T-cell (primary cell): ENCODE measurements at regions of chr19 and their contacts with region 1.

Region 1: DNA sequence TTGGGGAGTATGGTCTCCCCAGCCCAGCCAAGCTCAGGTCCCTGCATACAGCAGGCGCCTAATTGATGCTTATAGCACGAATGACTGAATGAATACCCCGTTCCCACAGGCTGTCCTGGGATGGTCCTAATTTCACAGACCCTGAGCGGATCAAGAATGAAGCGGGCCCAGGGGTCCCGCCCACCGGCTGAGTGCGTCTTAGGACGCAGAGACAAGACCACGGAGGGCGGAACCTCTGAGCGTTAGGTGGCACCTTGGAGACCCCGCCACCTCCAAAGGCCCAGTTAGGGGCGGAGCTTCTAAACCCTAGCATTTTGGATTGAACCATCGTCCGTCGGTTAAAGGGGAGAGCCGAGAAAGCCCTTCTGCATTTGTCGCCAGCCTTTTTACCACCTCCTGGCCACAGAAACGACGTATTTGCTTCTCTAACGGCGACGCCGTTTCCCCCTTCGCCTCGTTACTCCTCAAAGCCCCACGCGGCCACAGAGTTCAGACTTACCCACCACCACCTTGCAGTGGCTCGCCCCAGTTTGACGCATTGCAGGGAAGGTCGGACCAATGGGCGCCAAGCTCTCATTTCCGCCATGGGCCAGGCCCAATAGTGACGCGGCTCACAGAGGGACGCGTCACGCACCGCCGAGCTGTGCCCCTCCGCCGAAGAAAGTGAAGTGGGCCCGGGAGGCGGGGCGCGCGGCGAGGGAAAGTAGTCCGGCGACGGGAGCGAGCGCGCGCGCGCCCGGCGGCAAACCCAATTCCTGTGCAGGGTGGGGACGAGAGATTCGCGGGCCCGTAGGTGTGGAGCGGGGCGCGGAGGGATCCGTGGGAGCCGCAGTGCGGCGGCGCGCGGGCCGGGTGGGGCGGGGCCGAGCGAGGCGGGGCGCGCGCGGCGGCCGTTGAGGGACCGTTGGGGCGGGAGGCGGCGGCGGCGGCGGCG is 479 bp upstream of the CALM3 start:
- DNase-seq: peak; percentile 88 to 99 (median 96)
- ATAC-seq: peak; percentile 85 to 89 (median 88)
- H3K4me3 ChIP-seq: peak overlapping the region; percentile 83 to 86
- H3K4me3 Mint-ChIP-seq: peak overlapping the region; percentile 90 to 99 (median 97)
- H3K27ac ChIP-seq: peak overlapping the region; percentile 100
- H3K27ac Mint-ChIP-seq: peak overlapping the region; percentile 100
- H3K4me1 ChIP-seq: peaks cover 7 to 47% of the 10 kb centered on the region in 2 experiments
- H3K4me1 Mint-ChIP-seq: peaks cover 32 to 47% (median 34%) of the 10 kb centered on the region in 3 donors
- H3K27me3 ChIP-seq: no peaks in the 10 kb centered on the region
- H3K27me3 Mint-ChIP-seq: peaks cover 0 to 2% of the 10 kb centered on the region in 2 donors

Region 2: GRCh38 chr19:46528601-46529590 is 71.8 kb before region 1 on chr19:
- CTCF ChIA-PET with region 1: no interaction called
- POLR2A ChIA-PET with region 1: no interaction called
- DNase-seq: no peak
- ATAC-seq: peak in 3 of 4 experiments; percentile 19 to 38 (median 29)
- H3K4me3 ChIP-seq: no peak overlapping the region
- H3K4me3 Mint-ChIP-seq: no peak overlapping the region
- H3K27ac ChIP-seq: no peak overlapping the region
- H3K27ac Mint-ChIP-seq: peak overlapping the region; percentile 6 to 58
- H3K4me1 ChIP-seq: peaks cover 5 to 22% of the 10 kb centered on the region in 2 experiments
- H3K4me1 Mint-ChIP-seq: peaks cover 32 to 34% (median 33%) of the 10 kb centered on the region in 3 donors
- H3K27me3 ChIP-seq: peaks cover 0 to 33% of the 10 kb centered on the region in 2 experiments
- H3K27me3 Mint-ChIP-seq: no peaks in the 10 kb centered on the region

Region 3: DNA sequence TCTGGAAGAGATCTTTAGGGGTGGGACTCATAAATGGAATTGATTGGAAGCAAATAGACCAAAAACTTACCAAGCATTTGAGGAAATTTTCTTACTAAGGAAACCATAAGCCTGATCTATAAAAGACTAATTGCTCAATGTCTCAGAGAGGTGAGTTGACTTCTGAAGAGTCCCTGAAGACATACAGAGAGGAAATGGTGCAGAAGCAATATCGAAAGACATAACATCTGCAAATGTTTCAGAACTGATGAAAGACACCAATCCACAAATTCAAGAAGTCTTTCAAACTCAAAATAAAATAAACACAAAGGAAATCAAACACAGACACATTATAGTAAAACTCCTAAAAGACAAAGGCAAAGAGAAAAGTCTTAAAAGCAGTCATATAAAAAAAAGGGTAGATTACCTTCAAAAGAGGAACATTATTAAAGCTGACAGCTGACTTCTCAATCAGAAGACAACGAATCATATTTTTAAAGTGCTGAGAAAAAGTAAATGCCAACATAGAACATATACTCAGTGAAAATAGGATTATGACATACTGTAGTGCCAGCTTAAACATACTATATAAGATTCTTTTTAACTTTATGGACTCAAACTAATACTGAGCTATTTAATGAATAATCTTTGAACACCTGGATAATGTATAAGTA is 44.9 kb before region 1 on chr19:
- CTCF ChIA-PET with region 1: interaction called in 1 of 2 experiments, 3 read pairs
- POLR2A ChIA-PET with region 1: interaction called in 1 of 2 experiments, 14 read pairs
- DNase-seq: no peak
- ATAC-seq: no peak
- H3K4me3 ChIP-seq: no peak overlapping the region
- H3K4me3 Mint-ChIP-seq: no peak overlapping the region
- H3K27ac ChIP-seq: no peak overlapping the region
- H3K27ac Mint-ChIP-seq: no peak overlapping the region
- H3K4me1 ChIP-seq: no peaks in the 10 kb centered on the region
- H3K4me1 Mint-ChIP-seq: no peaks in the 10 kb centered on the region
- H3K27me3 ChIP-seq: peaks cover 0 to 13% of the 10 kb centered on the region in 2 experiments
- H3K27me3 Mint-ChIP-seq: peaks cover 10 to 12% of the 10 kb centered on the region in 2 donors

Region 4: GRCh38 chr19:46614114-46614722 is 13.6 kb after region 1 on chr19:
- CTCF ChIA-PET with region 1: interaction called, 3 to 27 read pairs
- POLR2A ChIA-PET with region 1: interaction called in 1 of 2 experiments, 4 read pairs
- DNase-seq: peak in 34 of 35 experiments; percentile 54 to 88 (median 74)
- ATAC-seq: peak; percentile 53 to 59 (median 57)
- H3K4me3 ChIP-seq: no peak overlapping the region
- H3K4me3 Mint-ChIP-seq: peak overlapping the region in 2 of 3 donors; percentile 38 to 39
- H3K27ac ChIP-seq: peak overlapping the region; percentile 13
- H3K27ac Mint-ChIP-seq: peak overlapping the region; percentile 72 to 88
- H3K4me1 ChIP-seq: peaks cover 52 to 87% of the 10 kb centered on the region in 2 experiments
- H3K4me1 Mint-ChIP-seq: peaks cover 61 to 78% (median 71%) of the 10 kb centered on the region in 3 donors
- H3K27me3 ChIP-seq: peaks cover 0 to 5% of the 10 kb centered on the region in 2 experiments
- H3K27me3 Mint-ChIP-seq: no peaks in the 10 kb centered on the region